K562 (cell line): ENCODE measurements at regions of chr6 and their contacts with region 1.

Region 1: GRCh38 chr6:53348371-53349208 is at the start of gene ELOVL5:
- DNase-seq: peak; percentile 97 to 99 (median 97)
- ATAC-seq: peak; percentile 87
- H3K4me3 ChIP-seq: peak within 1 kb of the TSS; percentile 88
- H3K27ac ChIP-seq: peak within 1 kb of the TSS; percentile 91
- H3K4me1 ChIP-seq: peaks cover 0 to 31% of the 10 kb centered on the region in 2 experiments; a peak in 3 of 5 replicates
- H3K27me3 ChIP-seq: no peaks in the 10 kb centered on the region
- CTCF ChIP-seq: no peak
- EP300 ChIP-seq: no peak
- POLR2A ChIP-seq: peak; percentile 88
- RAD21 ChIP-seq: peak in 1 of 2 experiments; percentile 17; a peak in 1 of 4 replicates
- polyA plus RNA-seq, gene ELOVL5: 124 to 148 TPM

Region 2: DNA sequence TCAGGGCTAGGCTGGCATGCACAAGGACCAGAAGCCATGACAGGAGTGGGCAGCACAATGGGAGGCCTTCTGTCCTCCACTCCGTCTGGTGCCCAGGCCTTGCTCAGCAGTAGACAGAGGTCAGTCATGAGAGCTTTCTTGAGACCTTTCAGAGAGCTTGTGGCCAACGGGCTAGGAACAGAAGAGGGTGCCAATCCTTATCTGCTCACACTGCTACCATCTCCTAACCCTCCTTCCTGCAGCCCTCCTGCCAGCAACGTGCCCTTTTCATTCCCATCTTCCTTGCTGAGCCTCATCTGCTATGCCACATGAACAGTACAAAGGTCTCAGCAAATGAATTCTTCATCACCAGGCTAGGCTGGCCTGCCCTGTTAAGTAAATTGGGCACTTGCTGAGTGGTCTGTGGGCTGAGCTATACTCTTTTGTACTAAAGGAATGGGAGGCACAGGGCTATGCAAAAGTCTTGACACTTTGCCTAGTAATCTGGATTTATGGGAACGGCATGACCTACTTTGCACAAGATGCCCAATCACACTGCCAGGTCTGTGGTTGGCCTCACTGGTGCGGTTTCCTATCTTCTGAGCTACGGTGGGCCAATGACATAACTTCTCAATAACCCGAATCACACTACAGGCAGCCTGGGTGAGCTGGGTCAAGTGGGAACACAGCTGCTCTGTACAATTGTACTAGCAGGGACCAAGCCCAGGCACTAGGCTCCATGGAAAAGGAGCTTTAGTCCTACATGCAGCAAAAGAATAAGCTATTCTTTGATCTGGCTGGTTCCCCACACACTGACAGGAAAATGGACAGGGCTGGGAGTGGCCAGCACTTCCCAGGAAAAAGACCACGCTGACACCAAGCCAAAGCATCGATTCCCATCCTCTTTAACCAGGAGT is 47.7 kb before region 1 on chr6:
- CTCF ChIA-PET with region 1: no interaction called
- POLR2A ChIA-PET with region 1: interaction called, 3 read pairs
- in situ Hi-C with region 1: no loop called
- intact Hi-C with region 1: loop called (anchors 5 kb)
- DNase-seq: no peak
- ATAC-seq: no peak; the same call in none of the 3 replicates
- H3K4me3 ChIP-seq: no peak overlapping the region
- H3K27ac ChIP-seq: 0 out of 3 replicates have a peak overlapping the region, but pooled peaks have one; percentile 19
- H3K4me1 ChIP-seq: peaks cover 10 to 54% of the 10 kb centered on the region in 2 experiments
- H3K27me3 ChIP-seq: no peaks in the 10 kb centered on the region
- CTCF ChIP-seq: no peak
- EP300 ChIP-seq: no peak
- POLR2A ChIP-seq: no peak
- RAD21 ChIP-seq: no peak

Region 3: GRCh38 chr6:53309059-53309900 is 39.3 kb before region 1 on chr6:
- CTCF ChIA-PET with region 1: no interaction called
- POLR2A ChIA-PET with region 1: interaction called, 3 read pairs
- in situ Hi-C with region 1: no loop called
- intact Hi-C with region 1: loop called (anchors 5 kb)
- DNase-seq: peak; percentile 37 to 69 (median 46)
- ATAC-seq: peak; percentile 38
- H3K4me3 ChIP-seq: no peak overlapping the region
- H3K27ac ChIP-seq: peak overlapping the region; percentile 86
- H3K4me1 ChIP-seq: peaks cover 17 to 68% of the 10 kb centered on the region in 2 experiments
- H3K27me3 ChIP-seq: no peaks in the 10 kb centered on the region
- CTCF ChIP-seq: no peak
- EP300 ChIP-seq: no peak
- POLR2A ChIP-seq: no peak
- RAD21 ChIP-seq: no peak

Region 4: DNA sequence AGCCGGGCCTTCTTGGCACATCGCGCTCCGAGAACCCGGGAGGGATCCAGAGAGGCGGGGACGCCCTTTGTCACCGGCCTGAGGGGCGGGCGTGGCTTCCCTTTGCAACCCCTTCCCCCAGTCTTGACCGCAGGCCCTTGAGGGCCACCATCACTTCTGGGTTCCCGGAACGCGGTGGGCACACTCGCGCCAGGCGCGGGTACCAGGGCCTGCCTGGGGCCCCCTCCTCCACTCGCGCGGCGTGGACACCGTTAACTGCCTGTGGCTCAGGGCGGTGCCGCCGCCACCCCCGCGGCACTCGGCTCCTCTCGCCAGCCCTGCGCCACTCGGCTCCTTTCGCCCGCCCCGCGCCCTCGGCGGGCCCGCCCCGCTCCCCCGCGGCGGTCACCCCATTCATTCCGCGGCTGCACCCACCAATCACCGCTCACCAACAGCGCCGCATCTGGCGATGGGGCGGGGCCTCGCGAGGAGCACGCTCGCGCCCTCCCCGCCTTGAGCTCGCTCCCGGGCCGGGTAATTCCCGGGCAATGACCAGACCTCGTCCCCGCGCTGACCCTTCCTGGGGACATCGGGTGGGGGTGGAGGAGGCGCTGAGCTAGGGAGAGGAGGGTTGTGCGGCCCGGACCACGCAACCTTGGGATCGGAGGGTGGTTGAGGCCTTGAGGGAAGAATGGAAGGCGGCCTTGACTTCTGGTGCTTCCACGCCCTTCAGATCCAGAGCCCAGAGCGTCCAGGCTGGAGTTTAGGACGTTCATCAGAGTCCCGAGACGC is 10.7 kb after region 1 on chr6:
- CTCF ChIA-PET with region 1: no interaction called
- POLR2A ChIA-PET with region 1: interaction called, 10 read pairs
- in situ Hi-C with region 1: no loop called
- intact Hi-C with region 1: no loop called
- DNase-seq: peak; percentile 98 to 99 (median 98)
- ATAC-seq: peak; percentile 96
- H3K4me3 ChIP-seq: peak overlapping the region; percentile 46
- H3K27ac ChIP-seq: peak overlapping the region; percentile 99
- H3K4me1 ChIP-seq: peaks cover 20 to 32% of the 10 kb centered on the region in 2 experiments
- H3K27me3 ChIP-seq: no peaks in the 10 kb centered on the region
- CTCF ChIP-seq: no peak
- EP300 ChIP-seq: peak; percentile 33; the same call in 1 of the 2 replicates
- POLR2A ChIP-seq: peak; percentile 82
- RAD21 ChIP-seq: peak in 1 of 2 experiments; percentile 15; a peak in 2 of 4 replicates

Region 5: DNA sequence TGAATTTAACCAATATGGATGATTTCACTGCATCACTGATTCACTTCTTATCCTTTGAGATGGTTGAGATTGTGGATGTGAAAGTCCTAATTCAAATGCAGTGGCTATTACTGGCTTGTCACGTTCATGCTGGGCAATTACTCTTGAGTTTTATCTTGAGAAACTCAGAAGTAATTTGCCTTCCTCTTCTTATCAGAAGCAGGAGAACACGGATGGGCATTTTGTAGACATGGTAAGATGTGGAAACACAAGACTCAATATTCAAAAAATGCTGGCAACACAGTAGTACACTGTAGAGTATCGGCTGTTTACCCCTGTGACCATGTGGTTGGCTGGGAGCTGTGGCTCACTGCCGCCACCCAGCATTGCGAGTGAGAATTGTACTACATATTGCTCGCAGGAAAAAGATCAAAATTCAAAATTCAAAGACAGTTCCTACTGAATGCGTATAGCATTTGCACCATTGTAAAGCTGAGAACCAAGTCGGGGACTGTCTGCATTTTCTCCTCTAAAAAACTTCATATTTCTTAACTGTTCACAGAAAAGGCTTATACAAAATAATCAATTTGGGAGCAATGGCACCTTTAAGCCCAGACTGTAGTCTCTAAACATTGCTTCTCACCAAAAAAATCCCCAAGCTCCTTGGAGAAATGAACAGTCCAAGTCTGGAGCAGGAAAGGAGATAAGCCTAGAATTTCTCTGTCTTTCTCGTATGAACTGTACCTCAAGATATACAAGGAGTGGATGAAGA is 62.1 kb after region 1 on chr6:
- CTCF ChIA-PET with region 1: no interaction called
- POLR2A ChIA-PET with region 1: interaction called, 3 read pairs
- in situ Hi-C with region 1: no loop called
- intact Hi-C with region 1: loop called (anchors 2 kb)
- DNase-seq: peak; percentile 23 to 74 (median 52)
- ATAC-seq: peak; percentile 99
- H3K4me3 ChIP-seq: no peak overlapping the region
- H3K27ac ChIP-seq: no peak overlapping the region
- H3K4me1 ChIP-seq: no peaks in the 10 kb centered on the region; a peak in 1 of 5 replicates
- H3K27me3 ChIP-seq: peaks cover 4 to 9% of the 10 kb centered on the region in 2 experiments; a peak in 3 of 5 replicates
- CTCF ChIP-seq: peak; percentile 84 to 88 (median 86)
- EP300 ChIP-seq: peak; percentile 36; the same call in 1 of the 2 replicates
- POLR2A ChIP-seq: no peak
- RAD21 ChIP-seq: peak; percentile 87 to 96